ENCODE measurements at regions of chr19 and their contacts with region 1.

Region 1: DNA sequence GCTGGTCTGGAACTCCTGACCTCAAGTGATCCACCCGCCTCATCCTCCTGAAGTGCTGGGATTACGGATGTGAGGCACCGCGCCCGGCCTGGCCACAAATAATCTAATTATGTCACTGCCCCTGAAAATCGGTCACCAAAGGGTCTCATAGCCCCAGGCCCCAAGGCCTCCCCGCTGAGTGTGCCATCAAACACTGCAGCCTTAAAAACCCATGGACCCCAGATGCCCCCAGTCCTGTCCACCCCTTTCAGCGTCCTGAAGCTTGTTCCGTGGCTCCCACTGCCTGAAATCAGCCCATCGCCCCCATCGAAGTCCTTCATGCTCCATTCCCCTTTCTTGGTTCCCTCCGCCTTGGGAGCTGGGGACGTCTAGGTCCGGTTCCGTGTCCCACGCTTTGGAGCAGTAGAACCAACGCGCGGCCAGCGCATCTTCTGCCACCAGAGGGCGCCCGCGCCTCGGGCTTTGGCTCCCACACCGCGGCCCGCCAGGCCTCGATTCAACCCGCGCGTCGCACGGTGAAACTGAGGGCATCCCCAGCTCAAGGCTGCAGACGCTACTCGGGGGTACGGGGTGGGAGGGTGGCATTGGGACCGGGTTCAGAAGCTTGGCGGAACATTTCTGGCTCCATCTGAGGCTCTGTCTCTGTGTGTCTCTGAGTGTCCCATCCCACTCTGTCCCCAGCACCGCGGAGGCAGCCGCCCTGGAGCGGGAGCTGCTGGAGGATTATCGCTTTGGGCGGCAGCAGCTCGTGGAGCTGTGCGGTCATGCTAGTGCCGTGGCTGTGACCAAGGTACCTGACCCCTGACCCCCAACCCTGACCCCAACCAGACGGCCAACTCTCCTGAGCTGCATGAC is 3.5 kb downstream of the YJEFN3 start:
- DNase-seq: peak; percentile 46 to 57
- ATAC-seq: peak; percentile 52 to 82
- H3K4me3 ChIP-seq: no peak overlapping the region
- H3K27ac ChIP-seq: no peak overlapping the region
- H3K4me1 ChIP-seq: peaks cover 0 to 7% of the 10 kb centered on the region in 2 donors
- H3K27me3 ChIP-seq: peaks cover 0 to 3% (median 2%) of the 10 kb centered on the region in 3 donors
- CTCF ChIP-seq: peak; percentile 86 to 98 (median 91)
- POLR2A ChIP-seq: no peak

Region 2: DNA sequence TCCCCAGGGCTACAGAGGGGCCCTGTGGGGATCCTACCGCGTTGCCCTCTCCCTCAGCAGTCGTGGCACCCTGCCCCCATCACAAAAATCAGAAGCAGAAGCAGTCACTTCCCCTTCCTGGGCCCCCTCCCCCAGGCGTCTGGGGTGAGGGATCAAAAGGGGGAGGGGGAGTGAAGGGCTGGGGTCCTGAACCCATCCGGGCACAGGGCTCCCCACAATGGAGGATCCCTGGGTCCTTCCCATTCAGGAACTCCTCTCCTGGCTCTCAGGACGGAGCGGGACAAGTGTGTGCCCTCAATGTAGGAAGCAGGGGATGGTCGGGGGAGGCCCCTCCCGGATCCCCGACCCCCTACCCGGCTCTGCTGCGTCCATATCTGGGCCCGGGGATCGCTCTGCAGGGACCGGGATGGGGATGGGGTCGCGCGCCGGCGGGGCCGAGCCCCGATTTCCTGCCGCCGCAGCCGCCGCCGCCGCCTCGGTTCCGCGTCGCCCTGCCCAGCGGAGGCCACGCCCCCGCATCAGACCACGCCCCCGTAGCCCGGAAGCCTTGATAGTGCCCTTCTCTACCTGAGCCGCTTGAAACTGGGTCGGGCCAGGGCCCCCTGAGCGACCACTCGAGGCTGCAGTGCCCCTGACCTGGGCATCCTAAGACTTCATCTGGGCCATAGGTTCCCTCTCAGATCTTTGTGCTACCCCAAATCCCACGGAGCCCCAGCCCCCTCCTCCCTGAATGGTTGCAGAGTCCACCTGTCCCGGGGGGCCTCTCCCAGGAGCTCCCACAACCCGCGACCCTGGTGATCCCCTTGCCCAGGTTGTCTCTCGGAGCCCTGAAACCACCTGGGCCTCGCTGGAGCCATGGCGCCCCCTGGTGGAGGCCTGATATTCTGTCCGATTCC is 111.2 kb after region 1 on chr19 and contains the start of gene GMIP:
- in situ Hi-C with region 1: loop called in 3 of 4 experiments (anchors 5 to 10 kb)
- intact Hi-C with region 1: loop called (anchors 1 kb)
- DNase-seq: peak; percentile 16 to 39
- ATAC-seq: peak; percentile 68 to 69
- H3K4me3 ChIP-seq: peak within 1 kb of the TSS; percentile 55 to 78 (median 68)
- H3K27ac ChIP-seq: peak within 1 kb of the TSS in 1 of 4 donors; percentile 33
- H3K4me1 ChIP-seq: peaks cover 3 to 10% of the 10 kb centered on the region in 2 donors
- H3K27me3 ChIP-seq: peaks cover 0 to 4% (median 3%) of the 10 kb centered on the region in 3 donors
- CTCF ChIP-seq: peak; percentile 53 to 89 (median 81)
- POLR2A ChIP-seq: peak in 1 of 2 donors; percentile 18
- total RNA-seq, gene GMIP: 1.2 to 2.6 (median 1.6) TPM in 3 of 4 donors, not detected in the other

Region 3: DNA sequence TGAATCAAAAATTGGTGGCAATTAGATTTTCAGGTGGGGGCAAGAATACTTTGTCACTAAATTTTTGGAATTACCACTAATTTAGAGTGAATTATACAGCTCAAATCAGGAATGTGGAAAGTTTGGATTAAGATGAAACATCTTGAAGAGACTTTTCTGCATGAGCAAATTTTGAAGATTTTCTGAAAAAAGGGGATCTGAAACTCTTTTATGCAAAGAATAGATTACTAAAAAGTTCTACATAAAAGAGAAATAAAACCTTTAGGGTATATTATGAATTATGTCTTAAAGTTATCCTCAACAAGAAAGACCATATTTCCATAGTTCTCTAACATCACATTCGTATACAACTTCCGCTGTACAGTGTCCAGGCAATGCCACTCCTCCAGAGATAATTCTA is 405.2 kb after region 1 on chr19:
- in situ Hi-C with region 1: loop called in 3 of 4 experiments (anchors 10 to 25 kb)
- intact Hi-C with region 1: no loop called
- DNase-seq: no peak
- ATAC-seq: no peak
- H3K4me3 ChIP-seq: no peak overlapping the region
- H3K27ac ChIP-seq: no peak overlapping the region
- H3K4me1 ChIP-seq: no peaks in the 10 kb centered on the region
- H3K27me3 ChIP-seq: no peaks in the 10 kb centered on the region
- CTCF ChIP-seq: no peak
- POLR2A ChIP-seq: no peak

Region 4: DNA sequence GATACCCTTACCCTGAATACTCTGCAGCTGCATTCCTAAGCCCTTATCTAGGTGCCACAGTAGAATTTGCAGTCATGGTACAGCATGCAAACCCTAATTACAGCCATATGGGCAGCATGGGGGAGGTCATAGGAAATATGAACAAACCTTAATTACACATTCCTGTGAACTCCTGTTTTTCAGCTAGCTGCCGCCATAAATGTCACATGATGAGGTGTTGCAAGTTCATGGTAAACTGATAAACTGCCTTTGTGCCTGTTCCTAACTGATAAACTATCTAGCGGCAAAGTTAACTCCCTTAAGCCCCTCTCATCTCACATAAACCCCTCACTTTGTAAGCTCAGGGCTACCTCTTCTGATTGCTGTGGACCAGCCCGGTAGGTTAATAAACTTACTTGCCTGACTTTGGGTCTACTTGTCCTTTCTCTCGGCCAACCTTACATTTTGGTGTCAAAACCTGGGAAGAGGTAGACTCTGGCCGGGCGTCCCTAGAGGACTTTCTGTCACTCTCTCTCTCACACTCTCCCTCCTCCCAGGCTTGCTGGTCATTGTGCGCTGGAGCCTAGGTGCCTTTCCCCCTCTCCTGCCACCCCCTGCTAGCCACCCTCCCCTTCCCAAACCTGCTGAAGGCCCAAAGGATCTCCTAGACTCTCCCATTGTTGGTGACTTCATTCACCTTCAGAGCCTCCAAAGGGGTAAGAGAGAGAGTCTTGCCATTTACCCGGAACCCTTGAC is 411.8 kb after region 1 on chr19:
- in situ Hi-C with region 1: loop called in 3 of 4 experiments (anchors 10 to 25 kb)
- intact Hi-C with region 1: no loop called
- DNase-seq: no peak
- ATAC-seq: no peak
- H3K4me3 ChIP-seq: no peak overlapping the region
- H3K27ac ChIP-seq: no peak overlapping the region
- H3K4me1 ChIP-seq: no peaks in the 10 kb centered on the region
- H3K27me3 ChIP-seq: no peaks in the 10 kb centered on the region
- CTCF ChIP-seq: no peak
- POLR2A ChIP-seq: no peak

Region 5: GRCh38 chr19:19956434-19957075 is 424.4 kb after region 1 on chr19:
- in situ Hi-C with region 1: loop called in 1 of 4 experiments (anchors 25 kb)
- intact Hi-C with region 1: loop called (anchors 2 kb)
- DNase-seq: no peak
- ATAC-seq: no peak
- H3K4me3 ChIP-seq: no peak overlapping the region
- H3K27ac ChIP-seq: no peak overlapping the region
- H3K4me1 ChIP-seq: no peaks in the 10 kb centered on the region
- H3K27me3 ChIP-seq: no peaks in the 10 kb centered on the region
- CTCF ChIP-seq: no peak
- POLR2A ChIP-seq: no peak

Region 6: DNA sequence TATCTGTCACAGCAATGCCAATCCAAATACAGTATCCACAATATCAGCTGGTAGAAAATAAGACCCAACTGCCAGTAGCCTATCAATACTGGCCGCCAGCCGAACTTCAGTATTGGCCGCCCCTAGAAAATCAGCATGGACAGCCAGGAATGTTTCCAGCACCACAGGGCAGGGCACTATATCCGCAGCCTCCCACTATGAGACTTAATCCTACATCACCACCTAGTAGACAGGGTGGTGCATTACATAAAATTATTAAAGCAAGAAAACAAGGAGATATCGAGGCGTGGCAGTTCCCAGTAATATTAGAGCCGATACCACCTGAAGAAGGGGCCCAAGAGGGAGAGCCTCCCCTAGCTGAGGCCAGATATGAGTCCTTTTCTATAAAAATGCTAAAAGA is 746.2 kb after region 1 on chr19:
- in situ Hi-C with region 1: no loop called
- intact Hi-C with region 1: loop called (anchors 2 kb)
- DNase-seq: no peak
- ATAC-seq: no peak
- H3K4me3 ChIP-seq: no peak overlapping the region
- H3K27ac ChIP-seq: no peak overlapping the region
- H3K4me1 ChIP-seq: no peaks in the 10 kb centered on the region
- H3K27me3 ChIP-seq: no peaks in the 10 kb centered on the region
- CTCF ChIP-seq: peak in 3 of 5 experiments; percentile 4 to 73 (median 42)
- POLR2A ChIP-seq: no peak

Measured in gastrocnemius medialis (tissue), 4 donors.